Mammary epithelial cell (primary cell): ENCODE measurements at regions of chr2 and their contacts with region 1.

Region 1: DNA sequence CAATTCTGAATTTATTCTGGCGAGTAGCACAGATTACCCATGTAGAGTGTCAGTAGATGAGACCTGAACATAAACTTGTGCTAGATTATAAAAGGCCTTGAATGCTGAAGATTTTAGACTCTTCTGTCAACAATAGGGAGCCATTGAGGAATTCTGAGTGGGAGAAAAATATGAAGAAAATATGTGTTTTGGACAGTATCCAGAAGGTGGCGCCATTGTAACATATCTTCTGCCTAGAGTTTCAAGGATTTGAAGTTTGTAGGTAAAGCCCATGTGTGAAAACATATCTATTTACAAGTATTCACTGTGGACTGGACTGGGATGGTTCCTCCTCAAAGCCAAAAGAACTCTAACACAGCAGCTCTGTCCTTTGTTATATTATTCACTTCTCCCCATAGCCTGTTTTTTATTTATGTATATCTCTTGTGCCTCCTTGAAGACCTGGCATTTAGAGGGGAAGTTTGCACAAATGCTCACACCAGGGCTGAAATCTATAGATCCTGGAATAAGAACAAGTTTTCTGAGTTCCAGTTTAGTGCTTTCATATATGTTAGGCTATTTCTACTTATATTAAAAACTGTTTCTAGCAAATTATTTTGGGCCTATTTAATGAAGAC is 124.9 kb downstream of the RDH14 start:
- DNase-seq: peak; percentile 31
- H3K4me3 ChIP-seq: no peak overlapping the region
- H3K27ac ChIP-seq: no peak overlapping the region
- H3K4me1 ChIP-seq: no peaks in the 10 kb centered on the region
- H3K27me3 ChIP-seq: no peaks in the 10 kb centered on the region
- CTCF ChIP-seq: peak; percentile 61 to 68

Region 2: GRCh38 chr2:18455236-18455862 is 19.8 kb after region 1 on chr2:
- CTCF ChIA-PET with region 1: no interaction called
- dilution Hi-C with region 1: no loop called
- in situ Hi-C with region 1: no loop called
- intact Hi-C with region 1: no loop called
- DNase-seq: peak; percentile 5
- H3K4me3 ChIP-seq: no peak overlapping the region
- H3K27ac ChIP-seq: no peak overlapping the region
- H3K4me1 ChIP-seq: no peaks in the 10 kb centered on the region
- H3K27me3 ChIP-seq: peaks cover 4% of the 10 kb centered on the region
- CTCF ChIP-seq: peak in 1 of 2 donors; percentile 26

Region 3: DNA sequence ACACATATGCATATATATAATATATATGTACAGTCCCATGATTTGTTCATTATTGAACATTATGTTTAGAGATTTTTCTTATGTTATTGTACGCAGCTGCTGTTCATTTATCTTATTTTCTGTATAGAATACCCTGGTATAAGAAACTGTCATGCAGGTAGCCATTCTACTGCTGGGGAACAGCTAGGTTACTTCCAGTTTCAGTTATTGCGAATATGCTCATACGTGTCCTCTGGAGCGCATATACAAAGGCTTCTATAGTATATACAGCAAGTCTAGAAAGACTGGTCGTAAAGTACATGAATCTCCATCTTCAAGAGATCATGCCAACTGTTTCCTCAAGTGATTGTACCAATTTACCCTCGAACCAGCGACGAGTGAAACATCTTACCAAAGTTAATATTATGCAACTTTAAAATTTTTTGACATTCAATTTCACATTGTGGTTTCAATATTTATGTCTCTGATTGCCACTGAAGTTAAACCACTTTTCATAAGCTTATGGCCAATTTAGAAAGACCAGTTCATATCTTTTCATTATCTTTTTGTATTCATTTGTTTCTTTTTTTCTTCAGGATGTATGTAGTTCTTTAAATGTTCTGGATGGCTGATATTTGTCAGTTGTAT is 71.5 kb after region 1 on chr2:
- CTCF ChIA-PET with region 1: no interaction called
- dilution Hi-C with region 1: no loop called
- in situ Hi-C with region 1: no loop called
- intact Hi-C with region 1: no loop called
- DNase-seq: no peak
- H3K4me3 ChIP-seq: no peak overlapping the region
- H3K27ac ChIP-seq: no peak overlapping the region
- H3K4me1 ChIP-seq: no peaks in the 10 kb centered on the region
- H3K27me3 ChIP-seq: no peaks in the 10 kb centered on the region
- CTCF ChIP-seq: no peak

Region 4: DNA sequence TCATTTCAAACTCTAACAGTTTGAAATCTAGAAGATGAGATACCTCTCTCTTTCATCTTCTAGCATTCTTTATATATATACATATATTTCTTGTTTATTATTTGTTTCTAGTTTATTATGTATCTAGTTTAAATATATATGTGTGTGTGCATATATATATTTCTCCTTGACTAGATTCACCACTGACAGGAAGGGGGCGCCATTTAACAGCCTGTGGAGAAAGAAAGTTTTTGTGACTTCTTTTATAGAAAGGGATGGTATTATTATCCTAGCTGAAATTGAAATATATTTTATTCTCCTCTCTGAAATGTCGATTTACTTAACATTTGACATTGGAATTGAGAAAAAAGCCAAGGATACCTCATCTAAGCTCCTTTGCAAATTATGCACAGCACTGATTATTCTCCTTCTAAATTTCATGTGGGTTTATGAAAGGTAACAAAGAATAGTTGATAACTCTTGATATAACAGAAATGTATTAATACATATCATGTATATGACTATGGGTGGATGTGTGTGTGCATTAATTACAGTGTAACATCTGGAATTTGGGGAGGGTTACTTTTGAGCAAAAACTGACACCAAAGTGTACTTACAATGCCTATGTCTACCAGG is 314.5 kb after region 1 on chr2:
- CTCF ChIA-PET with region 1: interaction called, 5 read pairs
- dilution Hi-C with region 1: no loop called
- in situ Hi-C with region 1: no loop called
- intact Hi-C with region 1: loop called (anchors 5 kb)
- DNase-seq: peak; percentile 35
- H3K4me3 ChIP-seq: no peak overlapping the region
- H3K27ac ChIP-seq: no peak overlapping the region
- H3K4me1 ChIP-seq: peaks cover 9% of the 10 kb centered on the region
- H3K27me3 ChIP-seq: no peaks in the 10 kb centered on the region
- CTCF ChIP-seq: peak; percentile 73 to 81

Region 5: GRCh38 chr2:19347619-19348562 is 912.4 kb after region 1 on chr2:
- CTCF ChIA-PET with region 1: no interaction called
- dilution Hi-C with region 1: no loop called
- in situ Hi-C with region 1: loop called (anchors 10 to 25 kb)
- intact Hi-C with region 1: no loop called
- DNase-seq: peak; percentile 93
- H3K4me3 ChIP-seq: peak overlapping the region; percentile 55 to 89 (median 83)
- H3K27ac ChIP-seq: peak overlapping the region; percentile 91
- H3K4me1 ChIP-seq: peaks cover 5% of the 10 kb centered on the region
- H3K27me3 ChIP-seq: no peaks in the 10 kb centered on the region
- CTCF ChIP-seq: no peak

Region 6: GRCh38 chr2:19357402-19358241 is 922.1 kb after region 1 on chr2:
- CTCF ChIA-PET with region 1: no interaction called
- dilution Hi-C with region 1: no loop called
- in situ Hi-C with region 1: loop called (anchors 10 to 25 kb)
- intact Hi-C with region 1: loop called (anchors 1 kb)
- DNase-seq: peak; percentile 49
- H3K4me3 ChIP-seq: peak overlapping the region; percentile 71 to 90 (median 89)
- H3K27ac ChIP-seq: peak overlapping the region; percentile 67
- H3K4me1 ChIP-seq: peaks cover 27% of the 10 kb centered on the region
- H3K27me3 ChIP-seq: no peaks in the 10 kb centered on the region
- CTCF ChIP-seq: no peak

Region 7: DNA sequence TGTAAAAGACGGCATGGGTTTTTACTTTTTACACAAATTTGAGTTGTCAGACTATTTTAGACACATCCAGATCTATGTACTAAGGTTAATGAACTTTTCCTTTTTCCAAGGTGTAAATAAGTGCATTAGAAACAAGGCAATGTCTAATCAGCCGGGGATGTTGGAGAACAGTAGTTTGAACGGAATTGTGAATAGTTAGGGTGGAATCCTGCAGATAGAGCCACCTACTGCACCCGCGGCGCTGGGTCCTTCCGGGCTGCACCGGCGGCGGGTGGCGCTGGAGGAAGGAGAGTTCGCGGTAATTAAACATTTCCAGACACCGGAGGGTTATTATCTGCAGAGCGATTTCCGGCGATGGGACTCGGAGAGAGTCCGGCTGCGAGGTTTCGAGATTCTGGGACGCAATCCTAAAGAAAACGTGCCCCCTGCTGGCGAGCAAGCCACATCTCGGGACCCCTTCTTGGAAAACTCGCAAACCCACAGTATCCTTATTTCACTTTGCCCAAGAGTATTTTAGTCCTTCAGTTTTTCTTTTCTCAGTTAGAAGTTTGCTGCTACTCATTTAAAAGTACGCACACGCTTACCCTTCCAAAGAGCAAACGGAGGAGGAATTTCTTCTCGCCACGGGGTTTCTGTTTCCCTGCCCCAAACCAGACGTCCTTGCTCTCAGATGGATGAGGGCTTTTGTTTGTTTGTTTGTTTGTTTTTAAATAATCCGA is 927.4 kb after region 1 on chr2:
- CTCF ChIA-PET with region 1: no interaction called
- dilution Hi-C with region 1: no loop called
- in situ Hi-C with region 1: loop called (anchors 10 to 25 kb)
- intact Hi-C with region 1: loop called (anchors 1 kb)
- DNase-seq: peak; percentile 83
- H3K4me3 ChIP-seq: peak overlapping the region; percentile 53 to 67 (median 65)
- H3K27ac ChIP-seq: peak overlapping the region; percentile 45
- H3K4me1 ChIP-seq: peaks cover 24% of the 10 kb centered on the region
- H3K27me3 ChIP-seq: no peaks in the 10 kb centered on the region
- CTCF ChIP-seq: peak; percentile 67 to 79

Region 8: GRCh38 chr2:19667085-19667484 is 1231.6 kb after region 1 on chr2:
- CTCF ChIA-PET with region 1: no interaction called
- dilution Hi-C with region 1: no loop called
- in situ Hi-C with region 1: no loop called
- intact Hi-C with region 1: loop called (anchors 10 kb)
- DNase-seq: peak; percentile 54
- H3K4me3 ChIP-seq: no peak overlapping the region
- H3K27ac ChIP-seq: no peak overlapping the region
- H3K4me1 ChIP-seq: peaks cover 16% of the 10 kb centered on the region
- H3K27me3 ChIP-seq: no peaks in the 10 kb centered on the region
- CTCF ChIP-seq: peak; percentile 28 to 63